Head of caudate nucleus (tissue), 42 donors: ENCODE measurements at regions of chr3 and their contacts with region 1.

Region 1: GRCh38 chr3:134794950-134795745 is at the start of gene EPHB1:
- DNase-seq: peak; percentile 80 to 96 (median 89)

Region 2: GRCh38 chr3:134937256-134938028 is 142.3 kb after region 1 on chr3:
- intact Hi-C with region 1: loop called (anchors 10 kb)
- DNase-seq: peak in 1 of 42 donors; percentile 17

Region 3: DNA sequence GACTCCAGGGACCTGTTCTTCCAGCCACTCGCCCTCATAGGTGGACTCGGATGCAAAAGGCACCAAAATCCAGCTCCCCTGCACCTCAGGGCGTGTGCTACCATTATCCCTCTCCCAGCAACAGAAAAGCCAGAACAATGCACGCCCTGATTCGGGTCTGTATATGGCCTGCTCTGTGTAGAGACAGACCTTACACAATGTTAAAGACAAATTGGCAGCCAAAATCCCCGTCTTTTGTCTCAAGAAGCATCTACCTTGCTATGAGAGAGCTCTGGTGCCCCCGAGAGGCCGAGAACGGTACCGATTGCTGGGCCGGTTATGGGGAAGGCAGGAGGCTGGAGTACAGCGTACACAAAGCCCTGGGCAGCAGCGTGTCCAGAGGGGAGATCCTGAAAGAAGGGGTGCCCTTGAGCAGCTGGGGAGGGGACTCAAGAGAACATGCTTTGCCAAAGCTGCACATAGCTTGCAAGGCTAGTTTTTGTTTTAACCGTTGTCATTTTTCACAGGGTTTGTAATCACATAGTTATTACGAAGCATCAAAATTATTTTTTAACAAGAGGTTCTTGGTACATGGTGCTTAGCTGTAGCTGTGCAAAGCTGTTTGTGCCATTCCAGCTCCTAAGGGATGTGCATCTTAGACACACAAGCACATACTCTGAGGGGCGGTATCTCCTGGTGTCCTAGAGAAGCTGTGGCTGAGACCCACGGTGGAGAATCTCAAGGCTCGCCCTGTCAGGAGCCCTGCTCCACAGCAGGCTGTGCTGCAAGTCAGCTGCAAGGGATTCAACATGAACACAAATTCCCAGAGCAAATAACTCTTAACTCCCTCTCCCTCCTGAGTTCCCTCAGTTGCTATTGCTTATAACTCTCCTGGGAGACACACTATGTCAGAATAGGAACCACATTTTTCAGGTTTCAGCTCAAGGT is 708.9 kb after region 1 on chr3:
- intact Hi-C with region 1: loop called (anchors 10 kb)
- DNase-seq: peak; percentile 60 to 89 (median 82)